ENCODE measurements at regions of chr14 and their contacts with region 1.

Region 1: DNA sequence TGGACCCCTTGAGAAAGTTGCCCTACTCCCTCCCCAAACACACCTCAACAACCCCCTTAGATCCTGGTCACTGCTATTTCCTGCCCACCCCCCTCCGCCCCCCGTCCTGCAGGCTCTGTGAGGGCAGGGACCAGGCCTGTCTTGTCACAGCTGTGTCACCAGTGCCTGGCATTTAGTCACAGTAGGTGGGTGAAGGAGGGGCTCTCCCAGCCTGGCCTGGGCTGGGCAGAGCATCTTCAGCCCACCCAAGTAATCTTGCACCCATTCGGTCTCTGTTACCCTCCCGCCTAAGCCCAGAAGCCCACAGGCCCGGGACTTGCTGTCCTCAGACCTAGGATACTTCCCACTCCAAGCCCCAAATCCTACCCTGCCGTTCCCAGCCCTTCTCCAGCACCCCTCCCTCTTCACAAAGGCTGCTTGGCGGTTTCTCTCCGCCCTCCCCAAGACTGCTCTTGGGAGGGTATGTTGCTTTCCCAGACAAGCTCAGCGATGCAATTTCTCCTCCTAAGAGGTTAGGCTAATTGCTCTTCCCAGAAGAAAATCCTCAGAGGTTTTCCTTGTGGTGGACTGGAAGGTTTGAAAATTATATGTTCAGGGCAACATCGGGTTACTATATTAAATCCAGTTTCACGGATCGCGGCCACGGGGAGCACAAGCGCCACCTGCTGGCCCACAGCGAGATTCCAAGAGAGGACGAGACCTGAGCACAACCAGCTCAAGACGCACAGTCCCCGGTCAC is 50.8 kb upstream of the ZFP36L1 start:
- DNase-seq: peak in 1 of 2 experiments; percentile 74
- H3K4me3 ChIP-seq: no peak overlapping the region
- H3K27ac ChIP-seq: no peak overlapping the region
- H3K4me1 ChIP-seq: no peaks in the 10 kb centered on the region
- H3K27me3 ChIP-seq: no peaks in the 10 kb centered on the region
- CTCF ChIP-seq: peak; percentile 94

Region 2: GRCh38 chr14:67583711-67584644 is 1259.7 kb before region 1 on chr14:
- CTCF ChIA-PET with region 1: no interaction called
- POLR2A ChIA-PET with region 1: no interaction called
- intact Hi-C with region 1: loop called (anchors 2 kb)
- DNase-seq: peak; percentile 42 to 60
- H3K4me3 ChIP-seq: no peak overlapping the region
- H3K27ac ChIP-seq: no peak overlapping the region
- H3K4me1 ChIP-seq: no peaks in the 10 kb centered on the region
- H3K27me3 ChIP-seq: no peaks in the 10 kb centered on the region
- CTCF ChIP-seq: peak; percentile 85